ENCODE measurements at regions of chr11 and their contacts with region 1.

Region 1: GRCh38 chr11:7892840-7893254 is 38.2 kb downstream of the OR10A6 start:
- DNase-seq: no peak
- ATAC-seq: peak; percentile 75
- H3K4me3 Mint-ChIP-seq: no peak overlapping the region
- H3K27ac Mint-ChIP-seq: no peak overlapping the region
- H3K4me1 Mint-ChIP-seq: peaks cover 4% of the 10 kb centered on the region
- H3K27me3 Mint-ChIP-seq: peaks cover 9% of the 10 kb centered on the region

Region 2: GRCh38 chr11:8070417-8071115 is 177.7 kb after region 1 on chr11:
- CTCF ChIA-PET with region 1: no interaction called
- POLR2A ChIA-PET with region 1: no interaction called
- intact Hi-C with region 1: loop called in 1 of 2 experiments (anchors 10 kb)
- DNase-seq: no peak
- ATAC-seq: peak; percentile 70
- H3K4me3 Mint-ChIP-seq: no peak overlapping the region
- H3K27ac Mint-ChIP-seq: no peak overlapping the region
- H3K4me1 Mint-ChIP-seq: peaks cover 4% of the 10 kb centered on the region
- H3K27me3 Mint-ChIP-seq: peaks cover 17% of the 10 kb centered on the region